Right cardiac atrium (tissue), 5 donors: ENCODE measurements at regions of chr11 and their contacts with region 1.

Region 1: DNA sequence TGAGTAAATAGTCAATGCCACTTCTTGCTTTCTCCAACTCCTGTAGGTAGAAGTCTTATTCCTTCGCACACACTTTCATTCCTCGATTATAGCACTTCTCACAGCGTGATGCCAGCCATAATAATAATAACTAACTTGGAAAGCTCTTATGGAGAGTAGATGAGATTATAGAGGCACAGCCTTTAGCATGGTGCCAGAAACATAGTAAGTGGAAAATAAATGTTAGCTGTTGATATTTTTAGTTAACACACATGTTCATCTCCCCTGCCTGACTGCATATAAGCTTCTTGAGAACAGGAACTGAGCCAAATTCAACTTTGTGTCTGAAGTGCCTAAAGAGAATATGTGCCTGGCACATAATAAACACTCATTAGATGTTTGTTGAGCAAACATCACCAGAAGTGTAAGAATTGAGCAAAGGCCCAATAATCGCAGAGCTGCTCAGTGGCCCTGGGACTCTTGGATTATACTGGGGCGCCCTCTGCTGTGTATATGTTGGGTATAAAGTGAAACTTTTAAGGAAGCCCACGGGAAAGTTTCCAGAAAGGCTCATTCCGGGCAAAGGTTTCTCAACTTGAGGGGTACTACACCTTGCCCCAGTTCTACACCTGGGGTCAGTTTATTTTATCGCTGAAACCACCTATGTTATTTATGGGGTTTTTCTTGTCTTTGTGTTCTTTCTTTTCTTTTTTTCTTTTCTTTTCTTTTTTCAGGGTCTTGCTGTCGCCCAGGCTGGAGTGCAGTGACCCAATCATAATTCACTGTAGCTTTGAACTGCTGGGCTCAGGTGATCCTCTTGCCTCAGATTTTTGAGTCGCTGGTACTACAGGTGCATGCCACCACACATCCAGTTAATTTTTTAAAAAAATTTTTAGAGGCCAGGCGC is 22.3 kb downstream of the SLN start:
- DNase-seq: peak; percentile 61 to 88 (median 67)
- ATAC-seq: peak; percentile 88 to 91
- H3K4me3 ChIP-seq: no peak overlapping the region
- H3K27ac ChIP-seq: no peak overlapping the region
- H3K4me1 ChIP-seq: peaks cover 1% of the 10 kb centered on the region
- H3K27me3 ChIP-seq: no peaks in the 10 kb centered on the region

Region 2: GRCh38 chr11:107573438-107573837 is 116.1 kb before region 1 on chr11:
- intact Hi-C with region 1: loop called (anchors 5 kb)
- DNase-seq: no peak
- ATAC-seq: no peak
- H3K4me3 ChIP-seq: no peak overlapping the region
- H3K27ac ChIP-seq: no peak overlapping the region
- H3K4me1 ChIP-seq: no peaks in the 10 kb centered on the region
- H3K27me3 ChIP-seq: no peaks in the 10 kb centered on the region